ENCODE measurements at regions of chr16 and their contacts with region 1.

Region 1: GRCh38 chr16:7492122-7492521 is 159.5 kb downstream of the RBFOX1 start:
- DNase-seq: no peak
- ATAC-seq: no peak
- H3K4me3 Mint-ChIP-seq: no peak overlapping the region
- H3K27ac Mint-ChIP-seq: no peak overlapping the region
- H3K4me1 Mint-ChIP-seq: no peaks in the 10 kb centered on the region
- H3K27me3 Mint-ChIP-seq: no peaks in the 10 kb centered on the region
- CTCF ChIP-seq: no peak

Region 2: DNA sequence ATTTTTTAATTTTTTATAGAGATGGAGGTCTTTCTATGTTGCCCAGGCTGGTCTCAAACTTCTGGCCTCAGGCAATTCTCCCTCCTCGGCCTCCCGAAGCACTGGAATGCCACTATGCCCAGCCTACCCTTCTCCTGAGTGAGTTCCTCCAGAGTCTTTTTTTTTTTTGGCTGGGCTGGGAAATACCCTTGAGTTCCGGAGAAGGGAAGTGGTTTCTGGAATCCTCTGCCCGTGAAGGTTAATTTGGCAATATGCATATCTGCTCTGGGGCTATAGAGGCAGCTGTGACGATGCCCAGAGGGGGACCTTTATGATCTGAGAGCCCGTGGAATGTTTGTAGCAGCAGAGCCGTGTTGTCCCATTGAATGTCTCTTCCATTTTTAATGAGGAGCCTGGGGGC is 58.0 kb after region 1 on chr16:
- CTCF ChIA-PET with region 1: no interaction called
- POLR2A ChIA-PET with region 1: no interaction called
- intact Hi-C with region 1: loop called (anchors 10 kb)
- DNase-seq: no peak
- ATAC-seq: no peak
- H3K4me3 Mint-ChIP-seq: no peak overlapping the region
- H3K27ac Mint-ChIP-seq: no peak overlapping the region
- H3K4me1 Mint-ChIP-seq: no peaks in the 10 kb centered on the region
- H3K27me3 Mint-ChIP-seq: no peaks in the 10 kb centered on the region
- CTCF ChIP-seq: no peak

Measured in activated B cell treated with CpG ODN at 0.5 μM for 24 hours (primary cell).